H1 (cell line): ENCODE measurements at regions of chr10 and their contacts with region 1.

Region 1: GRCh38 chr10:112307358-112308124 is 24.3 kb downstream of the TECTB start:
- DNase-seq: peak; percentile 59 to 79
- H3K4me3 ChIP-seq: no peak overlapping the region
- H3K27ac ChIP-seq: no peak overlapping the region
- H3K4me1 ChIP-seq: peaks cover 0 to 3% (median under 1%) of the 10 kb centered on the region in 4 experiments; a peak in 2 of 7 replicates
- H3K27me3 ChIP-seq: no peaks in the 10 kb centered on the region
- CTCF ChIP-seq: peak; percentile 81 to 95 (median 85)
- EP300 ChIP-seq: no peak
- POLR2A ChIP-seq: no peak
- RAD21 ChIP-seq: peak; percentile 91 to 93

Region 2: GRCh38 chr10:112151524-112152039 is 156.0 kb before region 1 on chr10:
- CTCF ChIA-PET with region 1: interaction called, 32 read pairs
- POLR2A ChIA-PET with region 1: no interaction called
- DNase-seq: no peak
- H3K4me3 ChIP-seq: no peak overlapping the region
- H3K27ac ChIP-seq: no peak overlapping the region
- H3K4me1 ChIP-seq: no peaks in the 10 kb centered on the region
- H3K27me3 ChIP-seq: no peaks in the 10 kb centered on the region
- CTCF ChIP-seq: no peak
- EP300 ChIP-seq: no peak
- POLR2A ChIP-seq: no peak
- RAD21 ChIP-seq: no peak

Region 3: GRCh38 chr10:112168733-112169132 is 138.8 kb before region 1 on chr10:
- CTCF ChIA-PET with region 1: interaction called, 27 read pairs
- POLR2A ChIA-PET with region 1: interaction called, 3 read pairs
- DNase-seq: no peak
- H3K4me3 ChIP-seq: no peak overlapping the region
- H3K27ac ChIP-seq: no peak overlapping the region
- H3K4me1 ChIP-seq: no peaks in the 10 kb centered on the region
- H3K27me3 ChIP-seq: no peaks in the 10 kb centered on the region
- CTCF ChIP-seq: no peak
- EP300 ChIP-seq: no peak
- POLR2A ChIP-seq: no peak
- RAD21 ChIP-seq: no peak

Region 4: GRCh38 chr10:112195224-112195623 is 112.3 kb before region 1 on chr10:
- CTCF ChIA-PET with region 1: interaction called, 10 read pairs
- POLR2A ChIA-PET with region 1: no interaction called
- DNase-seq: no peak
- H3K4me3 ChIP-seq: no peak overlapping the region
- H3K27ac ChIP-seq: no peak overlapping the region
- H3K4me1 ChIP-seq: no peaks in the 10 kb centered on the region
- H3K27me3 ChIP-seq: no peaks in the 10 kb centered on the region
- CTCF ChIP-seq: no peak
- EP300 ChIP-seq: no peak
- POLR2A ChIP-seq: no peak
- RAD21 ChIP-seq: no peak

Region 5: GRCh38 chr10:112330162-112330561 is 22.6 kb after region 1 on chr10:
- CTCF ChIA-PET with region 1: interaction called, 31 read pairs
- POLR2A ChIA-PET with region 1: no interaction called
- DNase-seq: no peak
- H3K4me3 ChIP-seq: no peak overlapping the region
- H3K27ac ChIP-seq: no peak overlapping the region
- H3K4me1 ChIP-seq: no peaks in the 10 kb centered on the region
- H3K27me3 ChIP-seq: no peaks in the 10 kb centered on the region
- CTCF ChIP-seq: no peak
- EP300 ChIP-seq: no peak
- POLR2A ChIP-seq: no peak
- RAD21 ChIP-seq: no peak